Mammary epithelial cell (primary cell): ENCODE measurements at regions of chr12 and their contacts with region 1.

Region 1: DNA sequence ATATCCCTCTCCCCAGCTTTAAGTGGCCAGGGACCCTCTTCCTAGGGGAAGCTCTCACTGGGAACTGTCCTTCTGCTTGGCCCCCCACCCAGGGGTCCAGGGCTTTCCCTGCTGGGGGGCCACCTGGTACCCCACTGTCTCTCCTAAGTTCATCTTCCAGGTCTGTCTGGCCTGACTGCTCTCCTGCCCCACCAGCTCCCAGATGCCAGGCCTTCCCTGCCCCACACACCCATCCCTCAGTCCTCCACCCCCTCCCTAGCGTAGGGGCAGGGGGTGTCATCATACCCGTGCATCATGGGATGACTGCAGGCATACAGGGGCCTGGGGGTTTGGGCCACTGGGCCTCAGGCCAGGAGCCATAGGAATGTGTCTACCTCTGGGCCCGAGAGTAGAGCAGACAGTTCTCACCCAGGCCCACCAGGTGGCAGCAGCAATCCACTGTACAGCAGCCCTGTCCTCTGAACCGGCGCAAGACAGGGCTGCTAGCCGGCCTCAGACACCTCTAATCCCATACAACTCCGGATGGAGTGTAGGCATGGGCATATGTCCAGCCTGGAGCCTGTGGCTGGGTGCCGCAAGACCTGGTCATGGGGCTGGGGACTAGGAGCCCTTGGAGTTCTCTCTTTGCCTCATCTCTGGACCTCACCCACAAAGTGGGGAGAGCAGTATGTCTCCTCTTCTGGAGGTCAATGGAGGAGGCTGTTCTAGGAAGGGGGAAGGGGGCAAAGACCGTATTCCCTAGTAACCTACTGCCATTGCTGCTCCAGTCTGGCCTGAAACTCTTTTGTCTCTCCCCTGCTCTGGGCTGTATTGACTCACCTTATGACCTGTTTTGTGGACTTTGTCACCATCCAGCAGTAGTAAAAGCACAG is 10.0 kb upstream of the SMARCD1 start:
- DNase-seq: peak; percentile 62
- H3K4me3 ChIP-seq: no peak overlapping the region
- H3K27ac ChIP-seq: no peak overlapping the region
- H3K4me1 ChIP-seq: peaks cover 3% of the 10 kb centered on the region
- H3K27me3 ChIP-seq: no peaks in the 10 kb centered on the region
- CTCF ChIP-seq: peak; percentile 84 to 94

Region 2: DNA sequence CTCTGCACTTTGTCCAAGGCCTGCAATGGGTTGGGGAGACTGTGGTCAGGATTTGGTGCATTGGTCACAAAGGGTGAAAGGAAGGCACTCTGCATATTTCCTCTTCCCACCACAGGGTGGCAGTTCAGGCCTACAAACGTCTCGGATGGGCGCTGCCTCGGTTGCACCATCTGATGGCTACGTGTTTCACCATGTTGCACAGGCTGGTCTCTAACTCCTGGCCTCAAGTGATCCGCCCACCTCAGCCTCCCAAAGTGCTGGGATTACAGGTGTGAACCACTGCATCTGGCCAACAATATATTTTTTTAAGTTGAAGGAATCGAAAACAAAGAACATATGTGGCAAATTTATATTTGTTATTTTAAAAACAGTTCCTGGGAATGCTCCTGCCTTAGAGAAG is 298.8 kb before region 1 on chr12:
- CTCF ChIA-PET with region 1: interaction called, 3 read pairs
- dilution Hi-C with region 1: no loop called
- in situ Hi-C with region 1: loop called in 1 of 2 experiments (anchors 25 kb)
- intact Hi-C with region 1: loop called (anchors 1 kb)
- DNase-seq: peak; percentile 64
- H3K4me3 ChIP-seq: no peak overlapping the region
- H3K27ac ChIP-seq: no peak overlapping the region
- H3K4me1 ChIP-seq: peaks cover 15% of the 10 kb centered on the region
- H3K27me3 ChIP-seq: no peaks in the 10 kb centered on the region
- CTCF ChIP-seq: peak; percentile 84 to 85

Region 3: DNA sequence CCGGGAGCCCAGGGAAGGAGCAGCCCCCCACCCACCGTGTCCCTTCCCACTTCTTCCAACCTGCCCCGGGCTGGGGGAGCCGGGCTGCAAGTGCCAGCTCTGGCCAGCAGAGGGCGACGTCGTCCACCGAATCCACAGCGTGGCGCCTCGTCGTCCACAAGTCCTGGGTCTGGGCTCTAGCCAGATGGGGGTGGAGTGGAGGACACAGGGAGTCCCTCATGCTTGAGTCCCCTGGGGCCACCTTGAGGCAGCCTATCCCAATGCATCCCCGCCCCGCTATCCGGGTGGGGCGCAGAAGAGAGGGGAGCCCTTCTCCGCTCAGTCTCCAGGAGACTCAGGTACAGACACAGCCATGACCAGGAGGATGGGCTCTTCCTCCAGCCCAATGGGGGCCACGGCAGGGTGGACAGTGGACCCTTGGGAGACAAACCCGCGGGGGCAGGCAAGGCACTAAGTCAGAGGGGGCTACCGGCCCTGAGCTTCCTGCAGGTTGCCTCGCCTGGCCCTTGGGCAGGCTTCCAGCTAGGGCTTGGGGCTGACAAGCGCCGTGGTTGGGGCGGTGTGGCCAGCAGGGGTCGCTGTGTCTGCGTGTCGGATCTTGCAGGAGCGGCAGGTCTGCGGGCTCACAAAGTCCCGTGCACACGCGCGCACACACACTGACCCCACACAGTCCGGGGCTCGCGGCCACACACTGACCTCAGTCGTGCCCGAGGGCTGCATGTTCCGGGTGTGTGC is 108.0 kb before region 1 on chr12:
- CTCF ChIA-PET with region 1: interaction called, 12 read pairs
- dilution Hi-C with region 1: loop called (anchors 5 kb)
- in situ Hi-C with region 1: no loop called
- intact Hi-C with region 1: loop called (anchors 1 kb)
- DNase-seq: peak; percentile 66
- H3K4me3 ChIP-seq: peak overlapping the region; percentile 5 to 45 (median 21)
- H3K27ac ChIP-seq: no peak overlapping the region
- H3K4me1 ChIP-seq: peaks cover 32% of the 10 kb centered on the region
- H3K27me3 ChIP-seq: no peaks in the 10 kb centered on the region
- CTCF ChIP-seq: peak; percentile 85 to 88

Region 4: GRCh38 chr12:50103767-50104321 is 28.7 kb after region 1 on chr12 and contains the start of gene GPD1:
- CTCF ChIA-PET with region 1: interaction called, 3 read pairs
- dilution Hi-C with region 1: no loop called
- in situ Hi-C with region 1: no loop called
- intact Hi-C with region 1: loop called (anchors 2 kb)
- DNase-seq: peak; percentile 62
- H3K4me3 ChIP-seq: no peak within 1 kb of the TSS
- H3K27ac ChIP-seq: no peak within 1 kb of the TSS
- H3K4me1 ChIP-seq: peaks cover 21% of the 10 kb centered on the region
- H3K27me3 ChIP-seq: no peaks in the 10 kb centered on the region
- CTCF ChIP-seq: no peak
- total RNA-seq, gene GPD1: 0.73 to 1.2 TPM

Region 5: GRCh38 chr12:50174971-50175715 is 100.0 kb after region 1 on chr12:
- CTCF ChIA-PET with region 1: no interaction called
- dilution Hi-C with region 1: no loop called
- in situ Hi-C with region 1: loop called in 1 of 2 experiments (anchors 10 kb)
- intact Hi-C with region 1: loop called (anchors 1 kb)
- DNase-seq: no peak
- H3K4me3 ChIP-seq: no peak overlapping the region
- H3K27ac ChIP-seq: no peak overlapping the region
- H3K4me1 ChIP-seq: no peaks in the 10 kb centered on the region
- H3K27me3 ChIP-seq: no peaks in the 10 kb centered on the region
- CTCF ChIP-seq: peak; percentile 52 to 56

Region 6: GRCh38 chr12:50488801-50489200 is 413.6 kb after region 1 on chr12:
- CTCF ChIA-PET with region 1: no interaction called
- dilution Hi-C with region 1: no loop called
- in situ Hi-C with region 1: no loop called
- intact Hi-C with region 1: no loop called
- DNase-seq: no peak
- H3K4me3 ChIP-seq: no peak overlapping the region
- H3K27ac ChIP-seq: no peak overlapping the region
- H3K4me1 ChIP-seq: no peaks in the 10 kb centered on the region
- H3K27me3 ChIP-seq: no peaks in the 10 kb centered on the region
- CTCF ChIP-seq: no peak